ENCODE measurements at regions of chr10 and their contacts with region 1.

Region 1: GRCh38 chr10:66997021-66997420 is 71.2 kb downstream of the LRRTM3 start:
- DNase-seq: no peak
- ATAC-seq: no peak
- H3K4me3 ChIP-seq: no peak overlapping the region
- H3K27ac ChIP-seq: no peak overlapping the region
- H3K4me1 ChIP-seq: no peaks in the 10 kb centered on the region
- H3K27me3 ChIP-seq: no peaks in the 10 kb centered on the region
- CTCF ChIP-seq: no peak
- EP300 ChIP-seq: no peak
- POLR2A ChIP-seq: no peak
- RAD21 ChIP-seq: no peak

Region 2: DNA sequence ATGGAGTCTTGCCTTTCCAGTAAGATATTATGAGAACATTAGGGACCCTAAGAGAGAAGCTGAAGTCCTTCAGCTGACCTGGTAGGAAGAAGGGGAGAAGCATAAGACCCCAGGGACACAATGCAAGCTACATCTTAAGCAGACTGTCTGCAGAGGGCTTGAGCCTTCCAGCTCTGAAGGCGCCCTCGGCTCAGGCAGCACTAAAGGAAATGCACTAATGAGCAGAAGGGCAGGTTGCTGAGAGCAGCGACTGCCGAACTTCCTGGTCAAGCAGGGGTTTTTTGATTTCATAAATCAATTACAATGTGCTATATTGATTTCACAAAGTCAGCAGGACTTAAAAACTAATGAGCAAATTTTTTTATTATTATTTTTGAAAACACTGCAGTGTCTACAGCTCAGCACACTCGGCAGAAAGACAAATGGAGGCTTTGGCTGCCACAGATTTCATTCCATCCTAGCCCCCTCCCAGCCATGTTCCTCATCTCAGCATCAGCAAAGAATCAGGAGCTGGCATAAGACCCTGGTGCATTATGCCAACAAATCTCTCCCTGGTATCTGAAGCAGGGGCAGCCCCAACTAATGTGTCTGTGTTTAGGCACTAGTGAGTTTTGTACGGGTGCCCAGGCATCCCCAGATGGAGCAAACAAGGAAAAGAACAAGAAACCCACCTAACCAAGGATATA is 14.1 kb before region 1 on chr10:
- CTCF ChIA-PET with region 1: interaction called, 5 read pairs
- POLR2A ChIA-PET with region 1: no interaction called
- RAD21 ChIA-PET with region 1: no interaction called
- SMC1A ChIA-PET with region 1: interaction called, 10 read pairs
- in situ Hi-C with region 1: no loop called
- intact Hi-C with region 1: no loop called
- DNase-seq: no peak
- ATAC-seq: 0 out of 3 replicates have a peak, but pooled peaks have one; percentile 44
- H3K4me3 ChIP-seq: no peak overlapping the region
- H3K27ac ChIP-seq: no peak overlapping the region
- H3K4me1 ChIP-seq: no peaks in the 10 kb centered on the region
- H3K27me3 ChIP-seq: no peaks in the 10 kb centered on the region
- CTCF ChIP-seq: no peak
- EP300 ChIP-seq: no peak
- POLR2A ChIP-seq: no peak
- RAD21 ChIP-seq: no peak